GM12878 (cell line): ENCODE measurements at regions of chr4 and their contacts with region 1.

Region 1: DNA sequence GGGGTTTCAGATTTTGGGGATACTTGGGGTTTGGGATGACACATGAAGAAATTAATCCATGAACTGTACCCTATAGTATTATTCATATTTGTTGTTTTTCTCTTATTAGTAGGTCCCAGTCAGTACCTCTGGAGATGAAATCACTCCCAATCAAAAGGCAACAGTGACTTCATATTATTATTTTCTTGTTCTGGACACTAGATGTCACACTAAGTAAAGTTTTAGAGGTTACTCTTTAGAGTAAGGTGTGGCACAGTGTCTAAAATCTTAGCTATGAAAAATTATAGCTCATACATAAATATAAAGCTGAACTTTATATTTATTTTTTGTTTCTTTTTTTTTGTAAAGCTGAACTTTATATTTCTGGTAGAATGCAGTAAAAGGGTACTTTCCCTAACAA is 35.1 kb downstream of the FAM114A1 start:
- DNase-seq: no peak
- ATAC-seq: peak; percentile 95
- H3K4me3 ChIP-seq: no peak overlapping the region
- H3K27ac ChIP-seq: no peak overlapping the region
- H3K4me1 ChIP-seq: no peaks in the 10 kb centered on the region
- H3K27me3 ChIP-seq: no peaks in the 10 kb centered on the region
- CTCF ChIP-seq: peak in 2 of 3 experiments; percentile 23 to 61; a peak in 3 of 6 replicates
- EP300 ChIP-seq: no peak
- POLR2A ChIP-seq: no peak
- RAD21 ChIP-seq: peak; percentile 79

Region 2: GRCh38 chr4:38069271-38069760 is 833.4 kb before region 1 on chr4:
- CTCF ChIA-PET with region 1: no interaction called
- POLR2A ChIA-PET with region 1: no interaction called
- RAD21 ChIA-PET with region 1: no interaction called
- SMC1A ChIA-PET with region 1: no interaction called
- in situ Hi-C with region 1: no loop called
- intact Hi-C with region 1: no loop called
- DNase-seq: no peak
- ATAC-seq: peak; percentile 63
- H3K4me3 ChIP-seq: no peak overlapping the region
- H3K27ac ChIP-seq: peak overlapping the region; percentile 22
- H3K4me1 ChIP-seq: peaks cover 19% of the 10 kb centered on the region
- H3K27me3 ChIP-seq: no peaks in the 10 kb centered on the region
- CTCF ChIP-seq: peak; percentile 48 to 79 (median 67); a peak in 5 of 6 replicates
- EP300 ChIP-seq: no peak
- POLR2A ChIP-seq: no peak
- RAD21 ChIP-seq: peak; percentile 92

Region 3: GRCh38 chr4:38654273-38654672 is 248.4 kb before region 1 on chr4:
- CTCF ChIA-PET with region 1: no interaction called
- POLR2A ChIA-PET with region 1: no interaction called
- RAD21 ChIA-PET with region 1: no interaction called
- SMC1A ChIA-PET with region 1: no interaction called
- in situ Hi-C with region 1: no loop called
- intact Hi-C with region 1: no loop called
- DNase-seq: no peak
- ATAC-seq: no peak
- H3K4me3 ChIP-seq: no peak overlapping the region
- H3K27ac ChIP-seq: no peak overlapping the region
- H3K4me1 ChIP-seq: no peaks in the 10 kb centered on the region
- H3K27me3 ChIP-seq: no peaks in the 10 kb centered on the region; a peak in 2 of 4 replicates
- CTCF ChIP-seq: no peak
- EP300 ChIP-seq: no peak
- POLR2A ChIP-seq: no peak
- RAD21 ChIP-seq: no peak

Region 4: DNA sequence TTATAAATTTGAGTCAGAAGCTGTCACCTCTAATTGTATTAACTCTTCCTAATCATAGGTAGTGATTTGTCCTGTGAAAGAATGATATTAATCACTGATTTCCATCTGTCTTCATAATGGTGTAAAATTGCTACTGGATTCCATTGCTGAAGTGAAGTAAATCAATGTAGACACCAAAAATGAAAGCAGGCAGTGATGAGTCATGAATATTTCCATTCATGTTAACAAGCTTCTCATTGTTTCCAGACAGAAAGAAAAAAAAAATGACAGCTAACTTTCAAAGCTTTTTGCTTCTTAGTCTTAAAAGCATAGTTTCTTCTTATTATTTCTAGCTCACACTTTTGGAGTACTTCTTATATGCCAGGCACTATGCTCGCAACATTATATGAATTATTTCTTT is 13.6 kb before region 1 on chr4:
- CTCF ChIA-PET with region 1: interaction called, 20 read pairs
- POLR2A ChIA-PET with region 1: interaction called, 4 read pairs
- RAD21 ChIA-PET with region 1: interaction called, 28 read pairs
- SMC1A ChIA-PET with region 1: interaction called, 48 read pairs
- in situ Hi-C with region 1: no loop called
- intact Hi-C with region 1: no loop called
- DNase-seq: peak; percentile 58
- ATAC-seq: peak; percentile 85
- H3K4me3 ChIP-seq: no peak overlapping the region
- H3K27ac ChIP-seq: peak overlapping the region; percentile 64; the same call in 1 of the 2 replicates
- H3K4me1 ChIP-seq: peaks cover 4% of the 10 kb centered on the region
- H3K27me3 ChIP-seq: no peaks in the 10 kb centered on the region
- CTCF ChIP-seq: no peak
- EP300 ChIP-seq: peak; percentile 68 to 86; a peak in 3 of 4 replicates
- POLR2A ChIP-seq: no peak
- RAD21 ChIP-seq: no peak

Region 5: DNA sequence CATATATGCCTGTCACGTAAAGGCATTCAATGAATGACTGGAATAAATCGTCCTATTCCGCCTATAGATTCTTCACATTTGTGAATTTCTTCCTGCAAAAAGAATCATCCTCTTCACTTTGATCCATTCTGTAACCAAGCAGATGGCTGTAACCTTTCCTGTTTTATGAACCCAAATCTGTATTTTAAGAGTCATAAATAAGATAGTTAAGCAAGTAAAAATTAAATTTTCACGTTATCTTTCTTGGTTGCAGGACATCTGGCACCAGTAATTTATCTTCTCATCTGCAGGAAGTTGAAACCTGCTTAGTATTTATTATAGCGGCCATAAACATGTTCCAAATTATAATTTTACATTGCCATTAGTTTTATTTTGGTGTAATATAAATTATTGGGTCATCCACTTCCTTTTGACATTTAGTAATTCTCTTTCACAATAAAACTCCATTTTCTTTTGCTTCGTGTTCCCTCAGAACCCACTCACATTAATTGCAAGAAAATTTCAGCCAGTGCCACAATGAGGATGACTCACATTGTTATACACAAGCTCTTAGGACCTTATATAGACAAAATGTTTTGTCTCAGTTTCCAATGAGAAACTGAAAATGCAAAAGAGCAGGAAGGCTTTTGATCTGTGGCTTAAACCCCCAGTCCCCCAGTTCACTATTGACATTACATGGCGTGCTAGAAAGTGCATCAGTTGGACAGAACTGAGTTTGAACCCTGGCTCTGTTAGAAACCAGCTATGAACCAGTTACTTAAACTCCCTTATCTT is 78.4 kb after region 1 on chr4:
- CTCF ChIA-PET with region 1: interaction called, 26 read pairs
- POLR2A ChIA-PET with region 1: interaction called, 3 read pairs
- RAD21 ChIA-PET with region 1: interaction called, 7 read pairs
- SMC1A ChIA-PET with region 1: interaction called, 9 read pairs
- in situ Hi-C with region 1: no loop called
- intact Hi-C with region 1: no loop called
- DNase-seq: peak; percentile 24
- ATAC-seq: peak; percentile 82
- H3K4me3 ChIP-seq: no peak overlapping the region
- H3K27ac ChIP-seq: peak overlapping the region; percentile 52
- H3K4me1 ChIP-seq: peaks cover 19% of the 10 kb centered on the region
- H3K27me3 ChIP-seq: no peaks in the 10 kb centered on the region
- CTCF ChIP-seq: no peak
- EP300 ChIP-seq: no peak
- POLR2A ChIP-seq: no peak
- RAD21 ChIP-seq: no peak

Region 6: GRCh38 chr4:39044364-39044955 is 141.8 kb after region 1 on chr4:
- CTCF ChIA-PET with region 1: interaction called, 11 read pairs
- POLR2A ChIA-PET with region 1: no interaction called
- RAD21 ChIA-PET with region 1: interaction called, 32 read pairs
- SMC1A ChIA-PET with region 1: interaction called, 55 read pairs
- in situ Hi-C with region 1: no loop called
- intact Hi-C with region 1: no loop called
- DNase-seq: peak; percentile 90
- ATAC-seq: peak; percentile 83
- H3K4me3 ChIP-seq: peak overlapping the region; percentile 83
- H3K27ac ChIP-seq: peak overlapping the region; percentile 81
- H3K4me1 ChIP-seq: peaks cover 14% of the 10 kb centered on the region
- H3K27me3 ChIP-seq: no peaks in the 10 kb centered on the region
- CTCF ChIP-seq: peak in 1 of 3 experiments; percentile 23; a peak in 1 of 6 replicates
- EP300 ChIP-seq: peak in 1 of 2 experiments; percentile 52; a peak in 1 of 4 replicates
- POLR2A ChIP-seq: peak; percentile 74
- RAD21 ChIP-seq: no peak

Region 7: DNA sequence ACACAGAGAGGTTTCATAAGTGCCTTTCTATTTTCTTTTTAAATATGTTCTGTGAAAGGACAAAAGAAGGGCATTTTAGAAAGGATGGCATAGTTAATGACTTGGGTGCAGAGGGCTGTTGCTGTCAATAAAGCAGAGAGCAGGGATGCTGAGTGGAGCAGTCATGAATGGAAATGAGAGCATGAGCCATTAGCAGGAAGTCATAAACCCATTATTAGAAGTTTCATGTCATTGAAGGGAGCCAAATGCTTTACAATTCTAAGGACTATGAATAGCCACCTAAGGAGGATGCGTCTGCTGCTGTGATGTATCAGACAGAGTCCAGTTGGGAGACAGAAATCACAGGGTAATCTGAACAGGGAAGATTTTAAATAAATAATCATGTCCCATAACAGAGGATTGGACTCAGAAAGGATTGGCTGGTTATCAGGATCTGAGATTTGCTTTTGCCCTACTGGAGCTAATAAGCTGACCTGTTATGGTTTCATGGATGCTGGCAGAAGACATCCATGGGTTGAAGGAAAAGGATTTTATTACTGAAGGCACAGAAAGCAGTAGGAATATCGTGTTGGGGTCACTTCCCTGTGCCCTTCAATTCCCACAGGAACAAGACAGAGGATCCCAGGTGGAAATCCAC is 232.1 kb after region 1 on chr4:
- CTCF ChIA-PET with region 1: interaction called, 295 read pairs
- POLR2A ChIA-PET with region 1: interaction called, 22 read pairs
- RAD21 ChIA-PET with region 1: interaction called, 214 read pairs
- SMC1A ChIA-PET with region 1: interaction called, 193 read pairs
- in situ Hi-C with region 1: loop called (anchors 5 kb)
- intact Hi-C with region 1: loop called (anchors 1 kb)
- DNase-seq: no peak
- ATAC-seq: peak; percentile 70
- H3K4me3 ChIP-seq: no peak overlapping the region
- H3K27ac ChIP-seq: peak overlapping the region; percentile 27; the same call in 1 of the 2 replicates
- H3K4me1 ChIP-seq: peaks cover 6% of the 10 kb centered on the region
- H3K27me3 ChIP-seq: no peaks in the 10 kb centered on the region
- CTCF ChIP-seq: no peak
- EP300 ChIP-seq: no peak
- POLR2A ChIP-seq: no peak
- RAD21 ChIP-seq: no peak

Region 8: DNA sequence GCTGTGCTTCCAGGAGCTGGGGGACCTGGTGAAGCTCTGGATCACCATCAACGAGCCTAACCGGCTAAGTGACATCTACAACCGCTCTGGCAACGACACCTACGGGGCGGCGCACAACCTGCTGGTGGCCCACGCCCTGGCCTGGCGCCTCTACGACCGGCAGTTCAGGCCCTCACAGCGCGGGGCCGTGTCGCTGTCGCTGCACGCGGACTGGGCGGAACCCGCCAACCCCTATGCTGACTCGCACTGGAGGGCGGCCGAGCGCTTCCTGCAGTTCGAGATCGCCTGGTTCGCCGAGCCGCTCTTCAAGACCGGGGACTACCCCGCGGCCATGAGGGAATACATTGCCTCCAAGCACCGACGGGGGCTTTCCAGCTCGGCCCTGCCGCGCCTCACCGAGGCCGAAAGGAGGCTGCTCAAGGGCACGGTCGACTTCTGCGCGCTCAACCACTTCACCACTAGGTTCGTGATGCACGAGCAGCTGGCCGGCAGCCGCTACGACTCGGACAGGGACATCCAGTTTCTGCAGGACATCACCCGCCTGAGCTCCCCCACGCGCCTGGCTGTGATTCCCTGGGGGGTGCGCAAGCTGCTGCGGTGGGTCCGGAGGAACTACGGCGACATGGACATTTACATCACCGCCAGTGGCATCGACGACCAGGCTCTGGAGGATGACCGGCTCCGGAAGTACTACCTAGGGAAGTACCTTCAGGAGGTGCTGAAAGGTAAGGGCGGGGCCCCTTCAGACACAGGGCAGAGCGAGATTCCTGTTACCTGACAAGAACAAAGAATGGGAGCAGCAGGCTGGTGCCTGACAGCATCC is 544.3 kb after region 1 on chr4:
- CTCF ChIA-PET with region 1: interaction called, 4 read pairs
- POLR2A ChIA-PET with region 1: no interaction called
- RAD21 ChIA-PET with region 1: interaction called, 5 read pairs
- SMC1A ChIA-PET with region 1: interaction called, 3 read pairs
- in situ Hi-C with region 1: loop called (anchors 25 kb)
- intact Hi-C with region 1: no loop called
- DNase-seq: peak; percentile 48
- ATAC-seq: peak; percentile 95
- H3K4me3 ChIP-seq: peak overlapping the region; percentile 18; the same call in 1 of the 2 replicates
- H3K27ac ChIP-seq: no peak overlapping the region
- H3K4me1 ChIP-seq: peaks cover 4% of the 10 kb centered on the region; the same call in 1 of the 2 replicates
- H3K27me3 ChIP-seq: no peaks in the 10 kb centered on the region
- CTCF ChIP-seq: peak; percentile 35 to 52 (median 39); a peak in 4 of 6 replicates
- EP300 ChIP-seq: no peak
- POLR2A ChIP-seq: peak; percentile 68
- RAD21 ChIP-seq: peak; percentile 47

Region 9: GRCh38 chr4:40289366-40290188 is 1386.9 kb after region 1 on chr4:
- CTCF ChIA-PET with region 1: no interaction called
- POLR2A ChIA-PET with region 1: no interaction called
- RAD21 ChIA-PET with region 1: no interaction called
- SMC1A ChIA-PET with region 1: no interaction called
- in situ Hi-C with region 1: no loop called
- intact Hi-C with region 1: no loop called
- DNase-seq: no peak
- ATAC-seq: peak; percentile 90
- H3K4me3 ChIP-seq: no peak overlapping the region
- H3K27ac ChIP-seq: no peak overlapping the region; the same call in 1 of the 2 replicates
- H3K4me1 ChIP-seq: peaks cover 12% of the 10 kb centered on the region
- H3K27me3 ChIP-seq: no peaks in the 10 kb centered on the region
- CTCF ChIP-seq: no peak
- EP300 ChIP-seq: no peak
- POLR2A ChIP-seq: no peak
- RAD21 ChIP-seq: 0 out of 2 replicates have a peak, but pooled peaks have one; percentile 3